Prostate gland (tissue), 2 donors: ENCODE measurements at regions of chr6 and their contacts with region 1.

Region 1: GRCh38 chr6:75208298-75209183 is 2.7 kb upstream of the COL12A1 start:
- DNase-seq: peak; percentile 73
- H3K4me3 ChIP-seq: no peak overlapping the region
- H3K27ac ChIP-seq: no peak overlapping the region
- H3K4me1 ChIP-seq: no peaks in the 10 kb centered on the region
- H3K27me3 ChIP-seq: peaks cover 3% of the 10 kb centered on the region
- CTCF ChIP-seq: peak; percentile 47 to 89 (median 84)
- POLR2A ChIP-seq: no peak

Region 2: DNA sequence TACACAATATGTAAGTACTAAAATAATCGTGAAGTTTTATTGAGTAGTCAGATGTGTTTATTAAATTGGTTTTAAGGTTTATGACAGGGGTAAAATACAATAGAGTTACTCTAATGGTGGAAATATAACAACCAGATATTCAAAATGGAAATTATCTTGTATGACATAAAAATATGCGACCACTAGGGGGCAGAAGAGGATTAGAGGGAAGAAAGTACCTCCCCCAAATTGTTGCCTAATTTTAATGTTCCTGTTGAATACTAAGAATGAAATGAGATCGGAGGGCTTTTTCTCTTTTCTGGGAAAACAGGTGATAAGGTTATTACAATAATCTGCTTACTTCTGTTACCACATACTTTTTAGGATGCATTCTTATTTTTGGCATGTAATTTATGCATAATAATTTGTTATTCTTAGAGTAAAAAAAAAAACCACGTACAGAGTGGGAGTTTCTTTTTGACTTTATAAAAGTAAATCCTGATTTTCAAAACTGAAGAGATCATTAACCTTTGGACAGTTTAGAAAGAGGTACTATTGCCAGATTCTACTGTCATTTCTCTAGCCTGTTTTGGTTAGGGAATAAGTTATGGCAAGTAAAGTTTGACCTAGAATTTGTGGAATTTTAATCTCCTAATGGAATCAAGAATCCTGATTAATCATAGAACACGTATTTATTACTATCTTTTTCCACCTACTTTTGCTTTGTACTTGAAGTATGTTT is 1353.4 kb before region 1 on chr6:
- intact Hi-C with region 1: loop called (anchors 5 kb)
- DNase-seq: peak; percentile 20
- H3K4me3 ChIP-seq: no peak overlapping the region
- H3K27ac ChIP-seq: no peak overlapping the region
- H3K4me1 ChIP-seq: no peaks in the 10 kb centered on the region
- H3K27me3 ChIP-seq: no peaks in the 10 kb centered on the region
- CTCF ChIP-seq: peak; percentile 44 to 76 (median 62)
- POLR2A ChIP-seq: no peak

Region 3: GRCh38 chr6:73969971-73970970 is 1238.3 kb before region 1 on chr6:
- intact Hi-C with region 1: loop called (anchors 5 kb)
- DNase-seq: no peak
- H3K4me3 ChIP-seq: no peak overlapping the region
- H3K27ac ChIP-seq: no peak overlapping the region
- H3K4me1 ChIP-seq: no peaks in the 10 kb centered on the region
- H3K27me3 ChIP-seq: no peaks in the 10 kb centered on the region
- CTCF ChIP-seq: peak in 3 of 4 experiments; percentile 17 to 37 (median 32)
- POLR2A ChIP-seq: no peak

Region 4: GRCh38 chr6:74091136-74091793 is 1117.3 kb before region 1 on chr6:
- intact Hi-C with region 1: loop called (anchors 5 kb)
- DNase-seq: no peak
- H3K4me3 ChIP-seq: no peak overlapping the region
- H3K27ac ChIP-seq: no peak overlapping the region
- H3K4me1 ChIP-seq: no peaks in the 10 kb centered on the region
- H3K27me3 ChIP-seq: no peaks in the 10 kb centered on the region
- CTCF ChIP-seq: peak; percentile 36 to 68 (median 56)
- POLR2A ChIP-seq: no peak

Region 5: DNA sequence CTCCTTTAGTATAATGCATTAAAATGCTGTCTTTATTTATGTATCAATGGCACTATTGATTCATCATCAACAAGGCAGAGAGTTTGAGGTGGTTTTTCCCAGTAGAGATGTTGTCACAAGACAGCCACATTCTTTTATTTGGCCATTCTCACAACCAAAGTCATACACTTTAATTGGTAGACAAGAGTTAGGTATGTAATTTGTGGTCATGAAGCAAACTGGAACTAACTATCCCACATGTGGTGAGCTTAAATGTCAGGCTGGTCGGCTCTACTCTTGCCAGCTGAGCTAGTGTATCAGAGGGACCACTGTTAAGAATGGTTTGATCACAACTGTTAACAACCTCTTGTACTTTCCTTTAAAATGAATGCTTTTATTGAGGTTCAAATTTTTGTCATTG is 797.9 kb before region 1 on chr6:
- intact Hi-C with region 1: loop called (anchors 2 kb)
- DNase-seq: no peak
- H3K4me3 ChIP-seq: no peak overlapping the region
- H3K27ac ChIP-seq: no peak overlapping the region
- H3K4me1 ChIP-seq: no peaks in the 10 kb centered on the region
- H3K27me3 ChIP-seq: no peaks in the 10 kb centered on the region
- CTCF ChIP-seq: no peak
- POLR2A ChIP-seq: no peak

Region 6: DNA sequence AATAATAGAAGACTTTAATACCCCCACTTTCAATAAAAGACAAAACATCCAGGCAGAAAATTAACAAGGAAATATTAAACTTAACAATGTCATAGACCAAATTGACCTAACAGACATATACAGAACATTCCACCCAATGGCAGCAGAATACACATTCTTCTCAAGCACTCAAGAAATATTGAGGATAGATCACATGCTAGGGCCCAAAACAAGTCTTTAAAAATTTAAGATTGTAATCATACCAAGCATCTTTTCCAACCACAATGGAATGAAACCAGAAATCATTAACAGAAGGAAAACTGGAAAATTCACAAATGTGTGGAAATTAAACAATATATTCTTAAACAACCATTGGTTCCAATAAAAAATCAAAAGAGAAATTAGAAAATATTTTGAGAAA is 163.7 kb before region 1 on chr6:
- intact Hi-C with region 1: no loop called
- DNase-seq: no peak
- H3K4me3 ChIP-seq: no peak overlapping the region
- H3K27ac ChIP-seq: no peak overlapping the region
- H3K4me1 ChIP-seq: no peaks in the 10 kb centered on the region
- H3K27me3 ChIP-seq: no peaks in the 10 kb centered on the region
- CTCF ChIP-seq: no peak
- POLR2A ChIP-seq: no peak

Region 7: GRCh38 chr6:75098709-75099108 is 109.8 kb before region 1 on chr6:
- intact Hi-C with region 1: loop called (anchors 5 kb)
- DNase-seq: no peak
- H3K4me3 ChIP-seq: no peak overlapping the region
- H3K27ac ChIP-seq: no peak overlapping the region
- H3K4me1 ChIP-seq: no peaks in the 10 kb centered on the region
- H3K27me3 ChIP-seq: no peaks in the 10 kb centered on the region
- CTCF ChIP-seq: no peak
- POLR2A ChIP-seq: no peak

Region 8: GRCh38 chr6:75299801-75300530 is 91.4 kb after region 1 on chr6:
- intact Hi-C with region 1: no loop called
- DNase-seq: no peak
- H3K4me3 ChIP-seq: no peak overlapping the region
- H3K27ac ChIP-seq: no peak overlapping the region
- H3K4me1 ChIP-seq: no peaks in the 10 kb centered on the region
- H3K27me3 ChIP-seq: no peaks in the 10 kb centered on the region
- CTCF ChIP-seq: no peak
- POLR2A ChIP-seq: no peak